Activated CD4-positive, alpha-beta T cell treated with anti-CD3 and anti-CD28 coated beads for 36 hours (primary cell): ENCODE measurements at regions of chr5 and their contacts with region 1.

Region 1: GRCh38 chr5:157464519-157465171 is 4.6 kb downstream of the NIPAL4 start:
- DNase-seq: peak; percentile 87
- ATAC-seq: peak; percentile 92
- H3K4me3 Mint-ChIP-seq: peak overlapping the region; percentile 34
- H3K27ac Mint-ChIP-seq: peak overlapping the region; percentile 84
- H3K4me1 Mint-ChIP-seq: peaks cover 36% of the 10 kb centered on the region
- H3K27me3 Mint-ChIP-seq: peaks cover 18% of the 10 kb centered on the region

Region 2: GRCh38 chr5:157354800-157355199 is 109.8 kb before region 1 on chr5:
- CTCF ChIA-PET with region 1: interaction called, 3 read pairs
- POLR2A ChIA-PET with region 1: interaction called, 3 read pairs
- intact Hi-C with region 1: loop called (anchors 1 kb)
- DNase-seq: no peak
- ATAC-seq: no peak
- H3K4me3 Mint-ChIP-seq: no peak overlapping the region
- H3K27ac Mint-ChIP-seq: peak overlapping the region; percentile 22
- H3K4me1 Mint-ChIP-seq: peaks cover 53% of the 10 kb centered on the region
- H3K27me3 Mint-ChIP-seq: no peaks in the 10 kb centered on the region

Region 3: GRCh38 chr5:157431544-157432200 is 33.0 kb before region 1 on chr5:
- CTCF ChIA-PET with region 1: interaction called, 66 read pairs
- POLR2A ChIA-PET with region 1: no interaction called
- intact Hi-C with region 1: no loop called
- DNase-seq: peak; percentile 53
- ATAC-seq: peak; percentile 99
- H3K4me3 Mint-ChIP-seq: no peak overlapping the region
- H3K27ac Mint-ChIP-seq: no peak overlapping the region
- H3K4me1 Mint-ChIP-seq: peaks cover 5% of the 10 kb centered on the region
- H3K27me3 Mint-ChIP-seq: peaks cover 2% of the 10 kb centered on the region

Region 4: DNA sequence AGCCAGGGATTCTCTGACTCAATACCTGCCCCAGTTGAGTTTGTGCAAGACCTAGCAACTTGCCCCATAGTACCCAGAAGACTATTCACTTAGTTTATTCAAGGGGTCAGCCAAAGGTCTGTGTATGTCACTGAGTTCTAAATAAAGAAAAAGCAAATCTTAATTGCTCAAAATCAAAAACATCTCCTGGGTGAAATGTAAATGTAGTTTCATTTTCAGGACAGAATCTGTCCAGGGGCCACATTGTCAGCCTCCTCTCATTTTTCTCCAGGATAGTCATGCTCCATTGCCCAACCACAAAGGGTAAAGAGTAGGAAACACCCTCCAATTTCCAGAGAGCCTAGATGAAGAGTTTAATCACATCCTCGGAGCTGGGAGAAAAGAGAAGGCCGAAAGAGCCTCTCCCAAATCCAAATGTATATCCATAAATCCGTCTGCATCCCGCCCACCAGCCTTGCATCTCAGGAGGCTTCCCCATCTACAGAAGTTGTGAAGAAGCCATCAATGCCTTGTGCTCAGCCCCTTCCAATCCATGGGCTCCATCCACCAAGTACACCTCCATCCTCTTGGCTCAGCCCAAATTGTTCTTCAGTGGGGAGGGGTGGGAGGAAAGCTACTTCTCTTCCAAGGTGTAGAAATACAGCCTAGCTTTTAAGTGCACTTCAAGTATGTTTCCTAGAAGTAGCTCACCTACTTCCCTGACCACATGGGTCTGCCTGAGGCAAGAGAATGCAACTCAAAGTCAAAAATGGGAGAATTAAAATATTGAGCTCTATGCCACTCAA is 84.1 kb after region 1 on chr5:
- CTCF ChIA-PET with region 1: no interaction called
- POLR2A ChIA-PET with region 1: no interaction called
- intact Hi-C with region 1: no loop called
- DNase-seq: no peak
- ATAC-seq: no peak
- H3K4me3 Mint-ChIP-seq: no peak overlapping the region
- H3K27ac Mint-ChIP-seq: peak overlapping the region; percentile 79
- H3K4me1 Mint-ChIP-seq: peaks cover 82% of the 10 kb centered on the region
- H3K27me3 Mint-ChIP-seq: no peaks in the 10 kb centered on the region

Region 5: GRCh38 chr5:157718519-157718918 is 253.9 kb after region 1 on chr5:
- CTCF ChIA-PET with region 1: interaction called, 3 read pairs
- POLR2A ChIA-PET with region 1: no interaction called
- intact Hi-C with region 1: loop called in 1 of 2 experiments (anchors 10 kb)
- DNase-seq: peak; percentile 35
- ATAC-seq: peak; percentile 94
- H3K4me3 Mint-ChIP-seq: no peak overlapping the region
- H3K27ac Mint-ChIP-seq: no peak overlapping the region
- H3K4me1 Mint-ChIP-seq: peaks cover 24% of the 10 kb centered on the region
- H3K27me3 Mint-ChIP-seq: no peaks in the 10 kb centered on the region

Region 6: DNA sequence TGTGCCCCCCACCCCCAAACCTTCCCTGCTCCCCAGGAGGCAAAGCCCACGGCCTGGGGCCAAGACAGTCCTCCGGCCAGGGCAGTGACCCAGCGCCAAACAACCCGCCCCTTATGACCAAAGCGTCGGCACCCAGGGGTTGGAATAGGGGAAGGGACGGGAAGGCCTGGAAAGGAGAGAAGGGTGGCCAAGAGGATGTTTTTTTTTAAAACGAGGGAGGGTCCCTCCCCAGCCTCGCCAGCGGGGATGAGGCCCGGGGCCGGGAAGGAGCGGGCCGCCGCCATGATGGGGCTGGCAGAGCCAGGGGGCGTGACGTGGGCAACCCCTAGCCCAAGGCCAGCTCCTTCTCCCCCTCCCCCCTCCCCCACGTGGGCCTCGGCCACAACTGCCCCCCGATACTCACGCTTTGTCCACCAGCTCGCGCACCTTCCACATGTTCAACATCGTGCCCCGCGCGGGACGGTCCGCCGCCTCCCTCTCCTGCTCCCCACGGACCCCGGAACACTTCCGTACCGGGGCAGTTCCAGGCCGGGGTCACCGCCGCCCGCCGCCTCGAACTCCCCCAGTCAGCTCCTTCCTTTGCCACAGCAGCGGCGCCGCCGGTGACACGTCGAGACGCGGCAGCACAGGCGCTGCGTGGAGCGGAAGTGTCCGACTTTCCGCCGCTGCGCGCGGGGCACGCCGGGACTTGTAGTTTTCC is 394.0 kb after region 1 on chr5 and contains the start of gene CLINT1:
- CTCF ChIA-PET with region 1: no interaction called
- POLR2A ChIA-PET with region 1: interaction called, 4 read pairs
- intact Hi-C with region 1: loop called in 1 of 2 experiments (anchors 5 kb)
- DNase-seq: peak; percentile 94
- ATAC-seq: peak; percentile 81
- H3K4me3 Mint-ChIP-seq: peak within 1 kb of the TSS; percentile 91
- H3K27ac Mint-ChIP-seq: peak within 1 kb of the TSS; percentile 96
- H3K4me1 Mint-ChIP-seq: peaks cover 76% of the 10 kb centered on the region
- H3K27me3 Mint-ChIP-seq: no peaks in the 10 kb centered on the region
- total RNA-seq, gene CLINT1: 59.0 to 69.0 TPM